Left ventricle myocardium inferior (tissue), 1 donor: ENCODE measurements at regions of chr12 and their contacts with region 1.

Region 1: DNA sequence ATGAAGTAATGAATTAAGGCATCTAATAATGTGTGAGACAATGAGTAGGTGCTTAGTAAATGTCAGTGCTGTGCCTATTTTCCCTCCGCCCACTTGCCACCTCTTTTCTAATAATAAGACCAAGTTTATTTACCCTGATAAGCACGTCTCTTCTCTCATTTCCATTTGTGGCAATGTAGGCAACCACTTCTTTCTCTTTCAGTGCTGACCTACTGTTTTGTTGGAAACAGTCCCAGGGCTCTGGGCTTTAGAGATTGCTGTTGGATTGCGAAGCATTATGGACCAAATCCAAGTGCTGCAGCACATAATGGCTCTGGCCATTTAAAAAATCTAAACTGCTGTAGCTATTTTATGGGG is 141.3 kb upstream of the PLEKHG7 start:
- DNase-seq: no peak
- H3K4me3 ChIP-seq: no peak overlapping the region
- H3K27ac ChIP-seq: peak overlapping the region; percentile 76
- H3K4me1 ChIP-seq: peaks cover 40% of the 10 kb centered on the region
- H3K27me3 ChIP-seq: no peaks in the 10 kb centered on the region
- CTCF ChIP-seq: no peak

Region 2: GRCh38 chr12:91577586-91578539 is 983.7 kb before region 1 on chr12:
- intact Hi-C with region 1: loop called (anchors 10 kb)
- DNase-seq: no peak
- H3K4me3 ChIP-seq: peak overlapping the region; percentile 46
- H3K27ac ChIP-seq: no peak overlapping the region
- H3K4me1 ChIP-seq: peaks cover 13% of the 10 kb centered on the region
- H3K27me3 ChIP-seq: no peaks in the 10 kb centered on the region
- CTCF ChIP-seq: peak; percentile 80

Region 3: GRCh38 chr12:91825999-91826398 is 735.5 kb before region 1 on chr12:
- intact Hi-C with region 1: loop called (anchors 10 kb)
- DNase-seq: no peak
- H3K4me3 ChIP-seq: no peak overlapping the region
- H3K27ac ChIP-seq: no peak overlapping the region
- H3K4me1 ChIP-seq: no peaks in the 10 kb centered on the region
- H3K27me3 ChIP-seq: no peaks in the 10 kb centered on the region
- CTCF ChIP-seq: no peak

Region 4: GRCh38 chr12:92145731-92146496 is 415.6 kb before region 1 on chr12 and contains the start of gene BTG1:
- intact Hi-C with region 1: loop called (anchors 10 kb)
- DNase-seq: peak; percentile 98
- H3K4me3 ChIP-seq: peak within 1 kb of the TSS; percentile 97
- H3K27ac ChIP-seq: peak within 1 kb of the TSS; percentile 98
- H3K4me1 ChIP-seq: peaks cover 60% of the 10 kb centered on the region
- H3K27me3 ChIP-seq: no peaks in the 10 kb centered on the region
- CTCF ChIP-seq: no peak
- total RNA-seq, gene BTG1: 79.4 TPM

Region 5: DNA sequence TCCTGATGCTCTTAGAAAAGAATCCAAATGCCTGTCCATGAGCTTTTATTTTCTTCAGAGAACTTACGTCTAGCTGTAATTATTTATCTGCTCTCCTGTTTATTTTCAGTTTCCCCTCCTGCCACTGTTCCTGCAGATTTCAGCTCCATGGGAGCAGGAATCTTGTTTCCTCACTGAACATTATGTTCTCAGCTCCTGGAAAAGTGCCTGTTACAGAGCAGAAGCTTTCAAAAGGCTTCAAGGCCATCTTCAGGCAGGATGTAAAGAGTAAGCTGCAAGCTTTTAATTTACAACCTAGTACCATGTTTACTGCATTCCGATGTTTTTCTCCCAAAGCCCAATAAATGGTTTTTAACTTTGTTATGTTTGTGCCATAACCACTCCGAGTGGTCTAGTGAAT is 317.5 kb before region 1 on chr12:
- intact Hi-C with region 1: loop called (anchors 10 kb)
- DNase-seq: no peak
- H3K4me3 ChIP-seq: peak overlapping the region; percentile 17
- H3K27ac ChIP-seq: peak overlapping the region; percentile 91
- H3K4me1 ChIP-seq: peaks cover 34% of the 10 kb centered on the region
- H3K27me3 ChIP-seq: no peaks in the 10 kb centered on the region
- CTCF ChIP-seq: peak; percentile 42

Region 6: GRCh38 chr12:92259852-92260251 is 301.7 kb before region 1 on chr12:
- intact Hi-C with region 1: no loop called
- DNase-seq: no peak
- H3K4me3 ChIP-seq: no peak overlapping the region
- H3K27ac ChIP-seq: no peak overlapping the region
- H3K4me1 ChIP-seq: no peaks in the 10 kb centered on the region
- H3K27me3 ChIP-seq: no peaks in the 10 kb centered on the region
- CTCF ChIP-seq: no peak